Activated CD4-positive, alpha-beta memory T cell treated with anti-CD3 and anti-CD28 coated beads, Interleukin-2, amount 10 ng/mL, durations not matched to agents 7 days and 5 days (primary cell): ENCODE measurements at regions of chr11 and their contacts with region 1.

Region 1: GRCh38 chr11:44596525-44597276 is 31.2 kb downstream of the CD82 start:
- DNase-seq: peak; percentile 84
- H3K4me3 Mint-ChIP-seq: peak overlapping the region; percentile 62
- H3K27ac Mint-ChIP-seq: peak overlapping the region; percentile 94
- H3K4me1 Mint-ChIP-seq: peaks cover 77% of the 10 kb centered on the region
- H3K27me3 Mint-ChIP-seq: no peaks in the 10 kb centered on the region

Region 2: GRCh38 chr11:44556735-44557409 is 39.8 kb before region 1 on chr11:
- CTCF ChIA-PET with region 1: interaction called, 4 read pairs
- POLR2A ChIA-PET with region 1: interaction called, 10 read pairs
- DNase-seq: peak; percentile 74
- H3K4me3 Mint-ChIP-seq: no peak overlapping the region
- H3K27ac Mint-ChIP-seq: peak overlapping the region; percentile 31
- H3K4me1 Mint-ChIP-seq: peaks cover 34% of the 10 kb centered on the region
- H3K27me3 Mint-ChIP-seq: peaks cover 4% of the 10 kb centered on the region

Region 3: GRCh38 chr11:44565211-44565952 is 31.3 kb before region 1 on chr11 and contains the start of gene CD82:
- CTCF ChIA-PET with region 1: interaction called, 4 read pairs
- POLR2A ChIA-PET with region 1: interaction called, 39 read pairs
- DNase-seq: peak; percentile 100
- H3K4me3 Mint-ChIP-seq: peak within 1 kb of the TSS; percentile 78
- H3K27ac Mint-ChIP-seq: peak within 1 kb of the TSS; percentile 90
- H3K4me1 Mint-ChIP-seq: peaks cover 57% of the 10 kb centered on the region
- H3K27me3 Mint-ChIP-seq: no peaks in the 10 kb centered on the region
- total RNA-seq, gene CD82: 193 to 208 TPM

Region 4: DNA sequence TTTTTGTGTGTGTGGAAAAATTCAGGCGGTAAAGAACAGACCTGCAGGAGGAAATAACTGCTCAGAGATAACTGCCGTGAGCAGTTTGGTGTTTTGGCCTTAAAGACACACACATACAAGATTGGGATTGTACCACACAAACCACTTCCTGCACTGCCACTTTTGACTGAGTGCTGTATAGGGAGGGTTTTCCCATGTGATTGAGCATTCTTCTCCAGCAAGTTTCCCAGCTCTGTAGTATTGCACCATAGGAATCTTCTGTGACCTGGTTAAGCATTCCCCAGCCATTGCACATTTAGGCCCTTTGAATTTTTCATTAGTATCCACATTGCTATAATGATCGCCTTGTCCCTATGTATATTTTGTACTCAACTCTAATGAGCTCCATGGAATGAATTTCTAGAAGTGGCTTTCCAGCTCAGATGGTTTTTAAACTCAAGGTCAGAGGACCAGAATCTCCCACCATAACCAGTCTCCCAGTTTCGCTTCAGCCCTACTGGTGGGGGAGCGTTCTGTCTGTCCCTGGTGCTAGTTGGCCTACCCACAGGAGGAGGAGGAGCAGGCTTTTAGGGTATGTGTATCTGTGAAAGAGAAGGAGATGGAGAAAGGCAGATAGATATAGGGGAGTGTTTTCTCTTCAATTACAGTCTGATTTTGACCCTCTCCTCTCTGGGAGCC is 22.0 kb before region 1 on chr11:
- CTCF ChIA-PET with region 1: interaction called, 5 read pairs
- POLR2A ChIA-PET with region 1: interaction called, 24 read pairs
- DNase-seq: peak; percentile 71
- H3K4me3 Mint-ChIP-seq: peak overlapping the region; percentile 59
- H3K27ac Mint-ChIP-seq: peak overlapping the region; percentile 93
- H3K4me1 Mint-ChIP-seq: peaks cover 91% of the 10 kb centered on the region
- H3K27me3 Mint-ChIP-seq: no peaks in the 10 kb centered on the region